ENCODE measurements at regions of chr2 and their contacts with region 1.

Region 1: DNA sequence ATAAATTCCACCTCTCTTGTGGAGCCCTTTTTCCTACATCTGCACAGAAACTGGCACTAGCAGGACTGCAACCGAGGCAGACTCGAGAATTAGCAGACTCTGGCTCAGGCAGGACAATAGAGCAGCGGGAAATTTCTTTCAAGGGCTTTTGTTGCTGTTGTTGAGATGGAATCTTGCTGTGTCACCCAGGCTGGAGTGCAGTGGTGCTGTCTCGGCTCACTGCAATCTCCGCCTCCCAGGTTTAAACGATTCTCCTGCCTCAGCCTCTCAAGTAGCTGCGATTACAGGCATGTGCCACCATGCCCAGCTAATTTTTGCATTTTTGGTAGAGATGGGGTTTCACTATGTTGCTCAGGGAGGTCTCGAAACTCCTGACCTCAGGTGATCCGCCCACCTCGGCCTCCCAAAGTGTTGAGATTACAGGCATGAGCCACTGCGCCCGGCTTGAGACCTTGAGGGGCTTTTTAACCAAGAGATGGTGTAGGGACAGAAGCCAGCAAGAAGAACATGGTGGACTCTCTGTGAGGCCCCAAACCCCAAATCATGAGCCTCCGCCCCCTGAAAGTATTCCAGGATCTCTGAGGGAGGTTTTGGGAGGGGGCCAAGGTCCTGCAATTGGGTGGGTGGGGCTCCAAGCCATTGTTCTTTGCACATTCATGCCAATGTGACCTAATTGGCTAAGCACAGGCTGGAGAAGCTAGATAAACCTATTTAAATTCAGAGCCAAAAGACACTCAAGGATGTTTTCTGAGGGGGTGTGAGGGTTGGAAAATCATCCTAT is 68.4 kb upstream of the MSH2 start:
- DNase-seq: no peak
- ATAC-seq: no peak
- H3K4me3 ChIP-seq: no peak overlapping the region
- H3K27ac ChIP-seq: no peak overlapping the region
- H3K4me1 ChIP-seq: peaks cover 0 to 2% (median 0%) of the 10 kb centered on the region in 4 donors
- H3K27me3 ChIP-seq: no peaks in the 10 kb centered on the region
- CTCF ChIP-seq: no peak
- POLR2A ChIP-seq: no peak

Region 2: GRCh38 chr2:47070920-47071824 is 263.4 kb before region 1 on chr2:
- intact Hi-C with region 1: no loop called
- DNase-seq: peak; percentile 72 to 83 (median 80)
- ATAC-seq: peak; percentile 19 to 57 (median 35)
- H3K4me3 ChIP-seq: no peak overlapping the region
- H3K27ac ChIP-seq: peak overlapping the region; percentile 19 to 74 (median 65)
- H3K4me1 ChIP-seq: peaks cover 0 to 31% (median 9%) of the 10 kb centered on the region in 4 donors
- H3K27me3 ChIP-seq: no peaks in the 10 kb centered on the region
- CTCF ChIP-seq: no peak
- POLR2A ChIP-seq: no peak

Region 3: GRCh38 chr2:47381408-47381807 is 46.9 kb after region 1 on chr2:
- intact Hi-C with region 1: loop called in 1 of 2 experiments (anchors 5 kb)
- DNase-seq: no peak
- ATAC-seq: no peak
- H3K4me3 ChIP-seq: no peak overlapping the region
- H3K27ac ChIP-seq: no peak overlapping the region
- H3K4me1 ChIP-seq: no peaks in the 10 kb centered on the region
- H3K27me3 ChIP-seq: no peaks in the 10 kb centered on the region
- CTCF ChIP-seq: no peak
- POLR2A ChIP-seq: no peak